ENCODE measurements at regions of chr1 and their contacts with region 1.

Region 1: DNA sequence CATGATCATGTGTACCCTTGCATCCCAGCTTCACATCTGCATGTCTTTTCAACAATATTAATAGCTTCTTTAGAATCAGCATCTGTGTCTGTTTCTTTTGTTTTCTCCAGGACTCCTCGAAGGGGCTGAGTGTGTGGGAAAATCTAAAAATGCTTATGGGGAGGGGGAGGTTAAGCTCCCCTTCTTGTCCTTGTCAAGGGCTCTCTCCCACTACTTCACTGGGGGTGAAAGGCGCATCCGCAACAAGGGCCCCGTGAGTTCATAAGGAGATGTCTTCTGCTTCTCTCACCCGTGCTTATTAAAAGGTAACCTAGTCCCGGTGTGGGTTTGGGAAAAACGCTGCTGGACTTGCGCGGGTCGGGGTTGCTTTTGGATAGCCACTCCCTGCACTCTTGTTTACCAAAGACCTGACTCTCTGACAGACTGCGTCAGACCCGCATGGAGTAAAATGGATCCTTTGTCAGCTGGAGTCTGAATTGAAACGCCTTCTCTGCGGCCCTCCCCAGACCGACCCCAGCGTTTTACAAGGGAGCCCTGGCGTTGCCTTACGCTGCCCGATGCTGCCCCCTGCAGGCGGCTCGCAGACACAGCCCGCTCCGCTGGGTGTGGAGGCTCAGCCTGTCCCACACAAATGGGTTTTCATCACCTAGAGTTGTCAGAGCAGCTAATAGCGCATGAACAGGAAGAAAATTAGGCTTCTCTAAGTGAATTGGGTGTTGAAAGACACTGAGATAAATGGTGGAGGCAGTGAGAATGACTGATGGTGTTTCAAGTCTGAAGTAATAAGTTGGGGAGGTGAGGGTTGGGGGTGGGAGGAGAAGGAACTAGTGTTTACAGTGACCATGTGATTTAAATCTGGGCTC is 53.8 kb downstream of the IER5 start:
- DNase-seq: peak; percentile 94
- ATAC-seq: peak; percentile 97

Region 2: GRCh38 chr1:180881806-180882509 is 260.4 kb before region 1 on chr1:
- intact Hi-C with region 1: loop called (anchors 1 kb)
- DNase-seq: no peak
- ATAC-seq: peak; percentile 45

Region 3: DNA sequence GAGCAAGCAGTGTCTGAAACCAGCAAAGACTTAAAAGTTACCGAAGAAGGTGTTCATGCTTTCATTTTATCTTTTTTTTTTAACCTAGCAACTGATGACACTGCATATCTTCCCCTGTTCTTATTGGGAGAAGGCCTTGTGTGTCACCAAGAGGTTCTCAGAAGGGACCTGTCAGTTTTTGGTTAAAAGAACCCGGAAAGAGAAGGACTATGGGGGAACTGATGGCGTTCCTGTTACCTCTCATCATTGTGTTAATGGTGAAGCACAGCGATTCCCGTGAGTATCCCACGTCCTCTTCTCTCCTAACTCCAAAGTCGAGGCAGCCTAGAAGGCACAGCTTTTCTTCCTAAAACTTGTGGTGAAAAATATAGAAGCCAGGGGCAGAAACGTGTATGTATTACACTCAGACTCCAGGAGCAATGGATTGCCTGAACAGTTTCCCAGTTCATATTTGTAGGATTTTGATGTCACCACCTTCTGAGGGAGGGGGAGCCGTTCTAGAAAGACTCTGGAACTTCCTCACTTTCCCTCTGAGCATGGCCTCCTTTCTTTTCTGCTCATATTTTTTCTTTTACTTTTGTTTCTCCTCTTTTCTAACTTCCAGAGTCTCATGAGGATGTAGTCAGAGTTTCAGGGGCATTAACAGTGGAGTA is 108.4 kb before region 1 on chr1 and contains the start of gene MR1:
- intact Hi-C with region 1: loop called (anchors 1 kb)
- DNase-seq: no peak
- ATAC-seq: peak; percentile 94
- total RNA-seq, gene MR1: 5.3 TPM

Region 4: GRCh38 chr1:181088079-181089016 is 54.0 kb before region 1 on chr1 and contains the start of gene IER5:
- intact Hi-C with region 1: loop called (anchors 2 kb)
- DNase-seq: peak; percentile 98
- ATAC-seq: peak; percentile 95
- total RNA-seq, gene IER5: 14.3 TPM

Region 5: GRCh38 chr1:181105134-181106021 is 36.9 kb before region 1 on chr1:
- intact Hi-C with region 1: loop called (anchors 5 kb)
- DNase-seq: peak; percentile 99
- ATAC-seq: peak; percentile 98

Region 6: GRCh38 chr1:181166377-181167196 is 24.3 kb after region 1 on chr1:
- intact Hi-C with region 1: loop called (anchors 1 kb)
- DNase-seq: no peak
- ATAC-seq: peak; percentile 97

Region 7: DNA sequence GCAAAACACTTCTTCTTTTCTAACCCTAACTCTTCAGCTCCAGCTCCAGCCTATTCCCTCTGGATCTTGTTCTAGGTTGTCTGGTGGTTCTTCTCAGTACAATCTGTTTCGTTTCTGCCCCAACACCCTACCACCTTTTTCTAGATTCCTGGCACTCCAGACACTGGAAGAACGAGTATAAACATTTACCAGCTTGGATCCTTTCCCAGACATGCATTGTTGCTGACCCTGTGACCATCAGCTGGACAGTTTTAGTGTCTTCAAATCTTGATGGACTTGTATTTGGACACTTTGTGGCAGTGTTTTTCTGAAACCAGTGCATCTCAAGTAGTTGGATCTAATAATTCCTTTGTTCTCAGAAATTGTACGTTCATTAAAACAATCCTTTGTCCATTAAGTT is 310.4 kb after region 1 on chr1:
- intact Hi-C with region 1: no loop called
- DNase-seq: no peak
- ATAC-seq: no peak